Posterior cingulate gyrus (tissue), 11 donors: ENCODE measurements at regions of chr10 and their contacts with region 1.

Region 1: GRCh38 chr10:86899670-86900276 is 57.6 kb downstream of the MMRN2 start:
- DNase-seq: peak in 7 of 10 donors; percentile 16 to 87 (median 62)

Region 2: GRCh38 chr10:86644152-86644793 is 255.5 kb before region 1 on chr10:
- intact Hi-C with region 1: loop called (anchors 2 kb)
- DNase-seq: no peak

Region 3: DNA sequence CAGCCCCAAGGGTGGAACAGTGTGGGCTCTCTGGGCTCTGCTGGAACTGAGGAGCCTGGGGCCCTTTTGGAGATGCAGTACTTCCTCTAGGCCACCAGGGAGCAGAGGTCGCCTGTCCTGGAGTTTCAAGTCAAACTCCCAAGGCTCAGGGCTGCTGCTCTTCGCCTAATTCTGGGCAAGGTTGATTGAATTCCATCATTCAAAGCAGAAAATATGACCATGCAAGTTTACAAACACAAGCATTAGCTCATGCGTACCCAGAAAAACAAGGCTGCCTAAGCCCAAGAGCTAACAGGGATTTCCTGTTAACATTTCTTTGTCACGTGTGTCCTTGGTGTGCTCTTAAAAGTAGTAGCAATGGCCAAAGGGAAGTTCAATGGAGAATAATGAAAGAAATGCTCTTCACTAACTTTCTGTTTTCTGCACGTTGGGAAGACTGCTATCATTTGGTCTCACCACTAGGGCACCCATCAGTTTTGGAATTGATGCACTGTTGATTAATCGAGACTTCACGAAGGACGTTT is 211.3 kb before region 1 on chr10:
- intact Hi-C with region 1: loop called (anchors 1 kb)
- DNase-seq: peak in 6 of 10 donors; percentile 52 to 93 (median 60)

Region 4: DNA sequence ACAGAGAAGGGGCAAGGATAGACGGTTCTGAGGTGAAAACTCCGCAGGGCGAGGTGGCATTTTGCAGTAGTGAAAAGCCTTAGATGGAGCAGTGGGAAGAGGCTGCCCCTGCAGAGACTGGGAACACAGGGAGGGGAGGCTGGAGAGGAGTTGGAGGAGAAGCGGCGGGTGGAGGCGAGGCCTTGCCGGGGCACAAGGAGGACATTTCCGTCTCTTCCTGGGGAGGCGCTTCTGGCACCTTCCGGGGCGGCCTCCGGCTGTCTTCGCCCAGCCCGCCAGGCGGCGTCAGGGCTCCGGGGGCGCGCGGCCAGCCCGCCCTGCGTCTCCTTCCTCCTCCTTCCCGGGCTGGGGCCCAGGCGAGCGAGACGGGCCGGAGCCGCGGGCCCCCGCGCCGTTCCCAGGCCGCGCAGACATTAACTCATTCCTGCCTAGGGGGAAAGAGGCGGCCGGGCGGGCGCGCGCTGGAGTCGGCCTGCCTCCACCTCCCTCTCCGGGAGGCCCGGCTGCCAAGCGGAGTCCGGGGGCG is 188.7 kb before region 1 on chr10:
- intact Hi-C with region 1: loop called (anchors 1 kb)
- DNase-seq: peak; percentile 69 to 98 (median 84)

Region 5: GRCh38 chr10:86755740-86756510 is 143.8 kb before region 1 on chr10:
- intact Hi-C with region 1: loop called (anchors 5 kb)
- DNase-seq: peak; percentile 83 to 98 (median 88)